GM12878 (cell line): ENCODE measurements at regions of chr16 and their contacts with region 1.

Region 1: DNA sequence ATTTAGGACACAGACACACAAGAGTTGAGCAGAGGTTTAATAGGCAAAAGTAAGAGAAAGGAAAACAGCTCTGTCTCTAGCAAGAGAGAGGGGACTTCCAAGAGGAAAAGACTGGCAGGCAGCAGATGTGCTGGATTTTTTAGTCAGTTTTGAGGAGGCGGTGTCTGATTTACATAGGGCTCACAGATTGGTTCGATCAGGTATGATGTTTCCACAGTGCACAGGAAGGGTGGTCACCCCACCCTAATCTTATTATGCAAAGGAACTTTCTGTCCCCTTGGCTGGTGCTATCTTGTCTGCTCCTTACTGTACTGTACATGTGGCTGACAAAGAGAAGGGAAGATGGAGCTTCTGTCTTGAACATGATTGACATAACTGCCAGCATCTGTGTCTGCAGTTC is 25.3 kb downstream of the BFAR start:
- DNase-seq: peak; percentile 71
- ATAC-seq: peak; percentile 100
- H3K4me3 ChIP-seq: no peak overlapping the region
- H3K27ac ChIP-seq: peak overlapping the region; percentile 57
- H3K4me1 ChIP-seq: peaks cover 5% of the 10 kb centered on the region; the same call in 1 of the 2 replicates
- H3K27me3 ChIP-seq: no peaks in the 10 kb centered on the region
- CTCF ChIP-seq: no peak
- EP300 ChIP-seq: no peak
- POLR2A ChIP-seq: no peak
- RAD21 ChIP-seq: no peak

Region 2: GRCh38 chr16:14527411-14528044 is 130.5 kb before region 1 on chr16:
- CTCF ChIA-PET with region 1: no interaction called
- POLR2A ChIA-PET with region 1: no interaction called
- RAD21 ChIA-PET with region 1: no interaction called
- SMC1A ChIA-PET with region 1: no interaction called
- in situ Hi-C with region 1: no loop called
- intact Hi-C with region 1: no loop called
- DNase-seq: no peak
- ATAC-seq: no peak
- H3K4me3 ChIP-seq: no peak overlapping the region
- H3K27ac ChIP-seq: no peak overlapping the region
- H3K4me1 ChIP-seq: peaks cover 12% of the 10 kb centered on the region; the same call in 1 of the 2 replicates
- H3K27me3 ChIP-seq: no peaks in the 10 kb centered on the region
- CTCF ChIP-seq: no peak
- EP300 ChIP-seq: no peak
- POLR2A ChIP-seq: no peak
- RAD21 ChIP-seq: no peak

Region 3: GRCh38 chr16:14672403-14672971 is 14.4 kb after region 1 on chr16:
- CTCF ChIA-PET with region 1: interaction called, 4 read pairs
- POLR2A ChIA-PET with region 1: interaction called, 9 read pairs
- RAD21 ChIA-PET with region 1: interaction called, 4 read pairs
- SMC1A ChIA-PET with region 1: interaction called, 25 read pairs
- in situ Hi-C with region 1: no loop called
- intact Hi-C with region 1: no loop called
- DNase-seq: peak; percentile 72
- ATAC-seq: peak; percentile 92
- H3K4me3 ChIP-seq: peak overlapping the region; percentile 19; the same call in 1 of the 2 replicates
- H3K27ac ChIP-seq: peak overlapping the region; percentile 47
- H3K4me1 ChIP-seq: peaks cover 9% of the 10 kb centered on the region
- H3K27me3 ChIP-seq: no peaks in the 10 kb centered on the region
- CTCF ChIP-seq: no peak
- EP300 ChIP-seq: peak in 1 of 2 experiments; percentile 23; a peak in 1 of 4 replicates
- POLR2A ChIP-seq: no peak
- RAD21 ChIP-seq: no peak